ENCODE measurements at regions of chr2 and their contacts with region 1.

Region 1: DNA sequence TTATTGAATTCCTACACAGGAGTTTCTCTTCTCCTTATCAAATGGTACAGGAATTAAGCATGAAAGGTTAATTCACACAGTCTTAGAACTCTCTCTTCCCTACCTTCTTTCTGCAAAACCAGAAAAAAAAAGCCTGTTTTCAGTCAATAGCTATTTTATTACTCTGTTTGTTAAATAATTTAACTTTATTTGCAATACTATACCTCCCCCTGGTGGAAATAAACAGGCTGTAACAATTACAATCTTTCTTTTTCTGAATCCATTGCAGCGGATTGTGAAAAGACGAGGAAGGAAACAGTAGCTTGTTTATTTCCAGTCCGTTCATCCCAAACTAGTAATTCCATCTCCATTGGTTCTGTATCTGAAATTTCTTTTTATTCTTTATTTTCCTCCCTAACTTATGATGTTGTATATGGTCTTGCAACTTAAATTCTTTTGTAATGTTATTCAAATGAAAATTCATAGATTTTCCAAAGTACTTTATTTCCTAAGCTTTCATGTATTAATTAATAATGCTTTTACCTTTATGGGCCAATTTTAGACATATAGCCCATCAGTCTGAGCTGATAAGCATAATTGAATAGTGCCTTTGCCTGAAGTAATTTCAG is 165.2 kb downstream of the SH3BP4 start:
- DNase-seq: peak in 4 of 5 donors; percentile 10 to 26 (median 24)
- H3K4me3 ChIP-seq: no peak overlapping the region
- H3K4me3 Mint-ChIP-seq: no peak overlapping the region
- H3K27ac ChIP-seq: no peak overlapping the region
- H3K27ac Mint-ChIP-seq: no peak overlapping the region
- H3K4me1 ChIP-seq: no peaks in the 10 kb centered on the region
- H3K4me1 Mint-ChIP-seq: peaks cover 0 to 2% (median 0%) of the 10 kb centered on the region in 4 donors
- H3K27me3 ChIP-seq: no peaks in the 10 kb centered on the region
- H3K27me3 Mint-ChIP-seq: peaks cover 8 to 13% of the 10 kb centered on the region in 2 donors

Region 2: GRCh38 chr2:234550511-234551107 is 566.4 kb before region 1 on chr2:
- CTCF ChIA-PET with region 1: interaction called, 8 read pairs
- POLR2A ChIA-PET with region 1: no interaction called
- intact Hi-C with region 1: loop called (anchors 1 kb)
- DNase-seq: peak; percentile 45 to 60 (median 50)
- H3K4me3 ChIP-seq: no peak overlapping the region
- H3K4me3 Mint-ChIP-seq: peak overlapping the region in 1 of 8 donors; percentile 24
- H3K27ac ChIP-seq: no peak overlapping the region
- H3K27ac Mint-ChIP-seq: no peak overlapping the region
- H3K4me1 ChIP-seq: no peaks in the 10 kb centered on the region
- H3K4me1 Mint-ChIP-seq: peaks cover 4 to 7% (median 5%) of the 10 kb centered on the region in 4 donors
- H3K27me3 ChIP-seq: no peaks in the 10 kb centered on the region
- H3K27me3 Mint-ChIP-seq: peaks cover 6 to 16% of the 10 kb centered on the region in 2 donors

Measured in CD4-positive, alpha-beta memory T cell (primary cell).